ENCODE measurements at regions of chr20 and their contacts with region 1.

Region 1: GRCh38 chr20:47501483-47502270 is at the start of gene NCOA3:
- DNase-seq: peak; percentile 65 to 96
- H3K4me3 ChIP-seq: peak within 1 kb of the TSS; percentile 76 to 98
- H3K27ac ChIP-seq: peak within 1 kb of the TSS; percentile 91 to 98
- H3K4me1 ChIP-seq: peaks cover 0 to 12% of the 10 kb centered on the region in 2 donors
- H3K27me3 ChIP-seq: no peaks in the 10 kb centered on the region
- CTCF ChIP-seq: peak; percentile 59 to 68 (median 60)
- total RNA-seq, gene NCOA3: 26.3 TPM

Region 2: DNA sequence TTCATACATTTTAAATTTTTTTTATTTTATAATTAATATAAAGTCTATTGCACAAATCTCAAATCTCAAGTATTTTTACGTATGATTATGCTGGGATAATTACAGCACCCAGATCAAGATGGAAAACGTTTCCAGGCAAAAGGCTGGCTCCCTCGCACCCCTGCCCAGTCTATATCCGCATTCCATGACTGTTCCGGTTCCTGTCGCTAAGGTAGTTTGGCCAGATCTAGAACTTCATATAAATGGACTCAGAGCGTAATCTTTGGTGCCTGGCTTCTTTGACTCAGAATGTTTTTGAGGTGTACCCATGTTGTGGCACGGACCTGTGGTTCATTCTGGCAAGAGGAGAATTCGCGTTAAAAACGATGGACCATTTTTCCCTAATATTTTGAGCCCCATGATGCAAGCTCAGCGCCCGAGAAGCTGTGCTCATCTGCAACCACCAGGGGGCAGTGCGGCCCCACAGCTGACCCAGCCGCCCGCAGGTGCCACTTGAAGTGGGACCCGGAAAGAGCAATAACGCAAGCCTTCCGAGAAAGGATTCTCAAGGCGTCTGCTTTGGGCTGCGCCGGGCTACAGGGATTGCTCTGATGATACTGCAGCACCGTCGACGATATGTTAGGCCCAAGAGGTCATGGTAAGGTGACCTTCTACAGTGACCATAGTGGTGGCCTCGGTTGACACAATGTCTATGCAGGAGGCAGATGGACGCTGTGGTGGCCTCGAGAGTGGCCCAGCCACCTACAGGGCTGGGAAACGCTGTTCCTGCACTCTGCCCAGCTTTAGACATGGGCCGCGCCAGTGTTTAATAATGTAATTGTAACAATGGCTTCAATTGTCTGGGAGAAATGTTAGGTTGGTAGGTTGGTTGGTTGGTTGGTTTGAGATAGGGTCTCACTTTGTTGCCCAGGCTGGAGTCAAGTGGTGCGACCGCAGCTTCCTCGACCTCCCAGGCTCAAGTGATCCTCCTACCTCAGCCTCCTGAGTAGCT is 305.3 kb before region 1 on chr20:
- intact Hi-C with region 1: loop called (anchors 10 kb)
- DNase-seq: peak; percentile 14 to 81
- H3K4me3 ChIP-seq: peak overlapping the region in 1 of 2 donors; percentile 33
- H3K27ac ChIP-seq: no peak overlapping the region
- H3K4me1 ChIP-seq: peaks cover 0 to 5% of the 10 kb centered on the region in 2 donors
- H3K27me3 ChIP-seq: no peaks in the 10 kb centered on the region
- CTCF ChIP-seq: peak; percentile 95 to 98 (median 96)

Region 3: GRCh38 chr20:47392015-47392720 is 109.5 kb before region 1 on chr20:
- intact Hi-C with region 1: loop called (anchors 2 kb)
- DNase-seq: peak in 1 of 2 donors; percentile 72
- H3K4me3 ChIP-seq: no peak overlapping the region
- H3K27ac ChIP-seq: peak overlapping the region; percentile 39 to 59
- H3K4me1 ChIP-seq: peaks cover 0 to 3% of the 10 kb centered on the region in 2 donors
- H3K27me3 ChIP-seq: no peaks in the 10 kb centered on the region
- CTCF ChIP-seq: no peak

Region 4: GRCh38 chr20:47464380-47465101 is 37.1 kb before region 1 on chr20:
- intact Hi-C with region 1: loop called (anchors 2 kb)
- DNase-seq: peak; percentile 33 to 93
- H3K4me3 ChIP-seq: no peak overlapping the region
- H3K27ac ChIP-seq: peak overlapping the region; percentile 90 to 92
- H3K4me1 ChIP-seq: peaks cover 3 to 26% of the 10 kb centered on the region in 2 donors
- H3K27me3 ChIP-seq: no peaks in the 10 kb centered on the region
- CTCF ChIP-seq: peak; percentile 56 to 63 (median 61)

Region 5: GRCh38 chr20:47566269-47566668 is 64.6 kb after region 1 on chr20:
- intact Hi-C with region 1: no loop called
- DNase-seq: no peak
- H3K4me3 ChIP-seq: no peak overlapping the region
- H3K27ac ChIP-seq: no peak overlapping the region
- H3K4me1 ChIP-seq: peaks cover 0 to 33% of the 10 kb centered on the region in 2 donors
- H3K27me3 ChIP-seq: no peaks in the 10 kb centered on the region
- CTCF ChIP-seq: no peak

Region 6: DNA sequence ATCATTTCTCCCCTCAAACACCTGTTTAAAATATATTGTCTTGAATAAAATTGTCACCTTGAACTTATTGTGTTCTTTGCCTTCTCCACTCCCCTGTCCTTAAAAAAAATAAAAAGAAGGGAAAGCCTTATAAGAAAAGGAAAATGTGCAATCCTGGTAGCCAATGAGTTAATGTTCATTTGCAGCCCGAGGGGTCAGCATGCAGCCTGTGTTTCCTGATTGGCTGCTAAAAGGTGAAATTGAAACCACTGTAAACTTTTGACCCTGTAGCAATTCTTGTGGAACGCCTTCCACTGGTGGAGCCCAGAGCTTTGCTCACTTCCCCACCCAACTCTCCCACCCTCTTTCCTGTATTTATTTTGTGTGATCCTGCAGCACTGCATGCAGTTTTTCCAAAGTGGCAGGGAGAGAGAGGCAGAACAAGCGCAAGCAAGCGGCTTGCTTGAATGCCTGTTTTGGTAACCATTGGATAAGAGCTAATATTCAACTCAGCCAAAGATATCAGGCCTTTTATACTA is 74.9 kb after region 1 on chr20:
- intact Hi-C with region 1: loop called (anchors 5 kb)
- DNase-seq: peak in 1 of 2 donors; percentile 71
- H3K4me3 ChIP-seq: peak overlapping the region; percentile 20 to 34
- H3K27ac ChIP-seq: peak overlapping the region in 1 of 2 donors; percentile 48
- H3K4me1 ChIP-seq: peaks cover 0 to 30% of the 10 kb centered on the region in 2 donors
- H3K27me3 ChIP-seq: no peaks in the 10 kb centered on the region
- CTCF ChIP-seq: no peak

Region 7: GRCh38 chr20:47610247-47610944 is 108.7 kb after region 1 on chr20:
- intact Hi-C with region 1: loop called (anchors 10 kb)
- DNase-seq: peak; percentile 33 to 84
- H3K4me3 ChIP-seq: no peak overlapping the region
- H3K27ac ChIP-seq: peak overlapping the region; percentile 41 to 55
- H3K4me1 ChIP-seq: peaks cover 3 to 11% of the 10 kb centered on the region in 2 donors
- H3K27me3 ChIP-seq: no peaks in the 10 kb centered on the region
- CTCF ChIP-seq: no peak

Region 8: DNA sequence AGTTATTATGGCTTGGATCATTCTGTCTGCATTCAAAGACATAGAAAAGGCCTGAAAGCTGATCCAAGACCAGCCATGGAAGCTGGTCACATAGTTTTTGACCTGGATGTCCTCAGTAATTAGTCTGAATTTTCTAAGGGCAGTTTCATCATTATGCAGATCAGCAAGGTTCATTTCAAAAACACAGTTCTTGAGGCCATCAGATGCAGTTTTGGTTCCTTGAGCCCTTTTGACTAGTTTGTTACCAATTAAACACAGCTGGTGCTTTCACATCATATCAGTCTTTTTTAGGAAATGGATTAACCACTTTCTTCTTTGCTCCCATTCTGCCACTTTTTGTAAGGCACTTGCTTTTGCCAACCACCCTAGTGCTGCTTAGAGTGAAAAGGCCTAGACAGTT is 129.4 kb after region 1 on chr20:
- intact Hi-C with region 1: no loop called
- DNase-seq: no peak
- H3K4me3 ChIP-seq: no peak overlapping the region
- H3K27ac ChIP-seq: no peak overlapping the region
- H3K4me1 ChIP-seq: no peaks in the 10 kb centered on the region
- H3K27me3 ChIP-seq: no peaks in the 10 kb centered on the region
- CTCF ChIP-seq: no peak

Region 9: GRCh38 chr20:47914792-47915191 is 413.1 kb after region 1 on chr20:
- intact Hi-C with region 1: no loop called
- DNase-seq: no peak
- H3K4me3 ChIP-seq: no peak overlapping the region
- H3K27ac ChIP-seq: no peak overlapping the region
- H3K4me1 ChIP-seq: no peaks in the 10 kb centered on the region
- H3K27me3 ChIP-seq: no peaks in the 10 kb centered on the region
- CTCF ChIP-seq: no peak

Measured in ascending aorta (tissue), 2 donors.